ENCODE measurements at regions of chr17 and their contacts with region 1.

Region 1: DNA sequence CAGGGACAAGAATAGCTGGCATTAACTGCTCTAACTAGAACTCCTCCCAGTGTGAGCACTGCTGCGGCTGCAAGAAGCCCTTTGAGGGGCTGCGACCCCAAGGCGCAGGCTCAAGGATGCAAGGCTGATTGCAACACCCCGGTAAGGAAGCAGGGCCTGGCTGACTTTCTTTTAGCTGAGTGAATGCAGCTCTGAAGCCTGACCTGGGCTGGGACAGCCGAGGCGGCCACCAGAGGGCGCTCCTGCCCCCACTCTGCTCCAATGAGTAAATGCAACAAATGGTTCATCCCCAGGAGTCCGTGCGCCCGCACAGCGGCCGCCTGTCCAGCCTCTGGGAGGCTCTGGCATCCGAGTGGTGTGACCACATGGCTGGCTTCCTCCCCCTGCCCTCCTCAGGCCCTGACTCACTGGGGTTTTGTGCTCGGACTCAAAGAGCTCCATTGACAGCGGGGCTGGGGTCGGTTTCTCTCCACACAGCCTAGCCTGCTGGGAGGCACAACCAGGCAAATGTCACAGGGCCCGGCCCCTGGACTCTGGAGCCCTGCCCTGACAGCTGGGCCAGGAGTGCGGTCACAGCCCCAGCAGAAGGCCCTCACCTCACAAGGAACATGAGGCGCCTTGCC is at the start of gene SMIM5:
- DNase-seq: peak; percentile 63
- ATAC-seq: peak; percentile 89
- H3K4me3 ChIP-seq: peak within 1 kb of the TSS in 1 of 2 experiments; percentile 6; a peak in 1 of 4 replicates
- H3K27ac ChIP-seq: peak within 1 kb of the TSS; percentile 73
- H3K4me1 ChIP-seq: peaks cover 15 to 22% of the 10 kb centered on the region in 2 experiments
- H3K27me3 ChIP-seq: no peaks in the 10 kb centered on the region
- CTCF ChIP-seq: peak; percentile 95 to 99 (median 99)
- POLR2A ChIP-seq: no peak
- RAD21 ChIP-seq: peak; percentile 92
- total RNA-seq, gene SMIM5: 0.12 TPM

Region 2: GRCh38 chr17:75430159-75430974 is 202.6 kb before region 1 on chr17:
- CTCF ChIA-PET with region 1: interaction called, 14 read pairs
- POLR2A ChIA-PET with region 1: no interaction called
- RAD21 ChIA-PET with region 1: no interaction called
- intact Hi-C with region 1: no loop called
- DNase-seq: no peak
- ATAC-seq: peak; percentile 66
- H3K4me3 ChIP-seq: peak overlapping the region in 1 of 2 experiments; percentile 43; a peak in 2 of 4 replicates
- H3K27ac ChIP-seq: peak overlapping the region; percentile 48; the same call in 1 of the 2 replicates
- H3K4me1 ChIP-seq: peaks cover 33 to 46% of the 10 kb centered on the region in 2 experiments
- H3K27me3 ChIP-seq: no peaks in the 10 kb centered on the region
- CTCF ChIP-seq: no peak
- POLR2A ChIP-seq: no peak
- RAD21 ChIP-seq: no peak

Region 3: GRCh38 chr17:75440738-75441448 is 192.1 kb before region 1 on chr17:
- CTCF ChIA-PET with region 1: no interaction called
- POLR2A ChIA-PET with region 1: no interaction called
- RAD21 ChIA-PET with region 1: no interaction called
- intact Hi-C with region 1: no loop called
- DNase-seq: no peak
- ATAC-seq: no peak
- H3K4me3 ChIP-seq: no peak overlapping the region
- H3K27ac ChIP-seq: no peak overlapping the region
- H3K4me1 ChIP-seq: peaks cover 4 to 20% of the 10 kb centered on the region in 2 experiments; a peak in 3 of 4 replicates
- H3K27me3 ChIP-seq: no peaks in the 10 kb centered on the region
- CTCF ChIP-seq: no peak
- POLR2A ChIP-seq: no peak
- RAD21 ChIP-seq: no peak

Region 4: GRCh38 chr17:75496005-75496404 is 137.0 kb before region 1 on chr17:
- CTCF ChIA-PET with region 1: no interaction called
- POLR2A ChIA-PET with region 1: no interaction called
- RAD21 ChIA-PET with region 1: no interaction called
- intact Hi-C with region 1: no loop called
- DNase-seq: no peak
- ATAC-seq: no peak
- H3K4me3 ChIP-seq: no peak overlapping the region
- H3K27ac ChIP-seq: no peak overlapping the region
- H3K4me1 ChIP-seq: no peaks in the 10 kb centered on the region
- H3K27me3 ChIP-seq: no peaks in the 10 kb centered on the region
- CTCF ChIP-seq: no peak
- POLR2A ChIP-seq: no peak
- RAD21 ChIP-seq: no peak

Region 5: DNA sequence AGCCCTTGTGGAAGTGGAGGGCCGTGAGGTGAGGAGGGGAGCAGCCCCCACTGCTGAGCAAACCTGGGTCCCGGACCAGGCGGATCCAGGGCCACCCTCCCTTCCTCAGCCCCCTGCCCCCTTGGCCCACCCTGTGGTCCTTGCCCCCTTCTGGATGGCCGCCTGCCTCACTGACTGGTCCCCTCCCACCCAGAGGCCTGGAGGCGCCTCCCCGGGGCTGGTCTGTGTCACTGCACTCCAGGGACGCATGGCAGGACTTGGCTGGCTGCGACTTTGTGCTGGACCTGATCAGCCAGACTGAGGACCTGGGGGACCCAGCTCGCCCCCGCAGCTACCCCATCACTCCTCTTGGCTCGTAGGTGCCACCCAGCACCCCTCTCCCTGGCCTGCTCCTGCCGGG is 19.0 kb before region 1 on chr17:
- CTCF ChIA-PET with region 1: interaction called, 63 read pairs
- POLR2A ChIA-PET with region 1: no interaction called
- RAD21 ChIA-PET with region 1: no interaction called
- intact Hi-C with region 1: no loop called
- DNase-seq: no peak
- ATAC-seq: peak; percentile 77
- H3K4me3 ChIP-seq: no peak overlapping the region
- H3K27ac ChIP-seq: no peak overlapping the region
- H3K4me1 ChIP-seq: peaks cover 24 to 45% of the 10 kb centered on the region in 2 experiments
- H3K27me3 ChIP-seq: no peaks in the 10 kb centered on the region
- CTCF ChIP-seq: peak; percentile 65 to 91 (median 67); a peak in 5 of 6 replicates
- POLR2A ChIP-seq: no peak
- RAD21 ChIP-seq: peak; percentile 86

Region 6: DNA sequence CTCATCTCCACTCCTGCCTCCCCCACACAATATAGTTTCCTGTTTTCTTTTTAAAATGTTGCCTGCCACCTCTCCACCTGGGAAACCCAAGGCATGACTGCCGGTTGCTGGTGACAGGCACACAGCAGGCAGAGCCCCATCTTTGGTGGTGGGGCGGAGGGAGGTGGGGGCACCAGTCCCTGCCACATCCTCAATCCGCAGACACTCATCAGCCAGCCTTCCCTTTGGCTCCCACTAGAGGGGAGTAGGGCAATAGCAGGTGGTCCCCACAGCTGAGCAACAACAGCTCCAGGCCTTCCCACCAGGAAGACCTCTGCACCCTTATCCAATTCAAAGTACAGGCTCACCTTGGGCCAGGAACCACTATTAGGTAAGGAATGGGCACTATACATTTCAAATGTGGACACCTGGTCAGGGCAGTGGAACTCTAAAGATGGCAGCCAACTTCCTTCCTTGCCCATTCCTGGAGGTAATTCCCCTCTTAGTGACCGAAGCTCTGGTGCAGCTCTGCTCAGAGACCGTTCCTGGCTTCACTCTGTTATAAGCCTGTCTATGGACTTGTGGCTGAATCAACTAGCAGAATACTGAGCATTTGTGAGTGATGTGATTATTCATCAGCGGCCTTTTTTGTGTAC is 20.1 kb after region 1 on chr17:
- CTCF ChIA-PET with region 1: interaction called, 75 read pairs
- POLR2A ChIA-PET with region 1: no interaction called
- RAD21 ChIA-PET with region 1: interaction called, 7 to 13 read pairs
- intact Hi-C with region 1: loop called (anchors 1 kb)
- DNase-seq: no peak
- ATAC-seq: peak; percentile 95
- H3K4me3 ChIP-seq: no peak overlapping the region
- H3K27ac ChIP-seq: no peak overlapping the region
- H3K4me1 ChIP-seq: no peaks in the 10 kb centered on the region
- H3K27me3 ChIP-seq: no peaks in the 10 kb centered on the region
- CTCF ChIP-seq: peak; percentile 87 to 98 (median 95)
- POLR2A ChIP-seq: no peak
- RAD21 ChIP-seq: peak; percentile 82

Region 7: GRCh38 chr17:75673487-75673886 is 40.5 kb after region 1 on chr17:
- CTCF ChIA-PET with region 1: interaction called, 13 read pairs
- POLR2A ChIA-PET with region 1: interaction called, 3 read pairs
- RAD21 ChIA-PET with region 1: no interaction called
- intact Hi-C with region 1: no loop called
- DNase-seq: no peak
- ATAC-seq: peak; percentile 24
- H3K4me3 ChIP-seq: no peak overlapping the region
- H3K27ac ChIP-seq: 0 out of 2 replicates have a peak overlapping the region, but pooled peaks have one; percentile 4
- H3K4me1 ChIP-seq: peaks cover 2 to 20% of the 10 kb centered on the region in 2 experiments; a peak in 3 of 4 replicates
- H3K27me3 ChIP-seq: no peaks in the 10 kb centered on the region
- CTCF ChIP-seq: no peak
- POLR2A ChIP-seq: no peak
- RAD21 ChIP-seq: no peak

Region 8: DNA sequence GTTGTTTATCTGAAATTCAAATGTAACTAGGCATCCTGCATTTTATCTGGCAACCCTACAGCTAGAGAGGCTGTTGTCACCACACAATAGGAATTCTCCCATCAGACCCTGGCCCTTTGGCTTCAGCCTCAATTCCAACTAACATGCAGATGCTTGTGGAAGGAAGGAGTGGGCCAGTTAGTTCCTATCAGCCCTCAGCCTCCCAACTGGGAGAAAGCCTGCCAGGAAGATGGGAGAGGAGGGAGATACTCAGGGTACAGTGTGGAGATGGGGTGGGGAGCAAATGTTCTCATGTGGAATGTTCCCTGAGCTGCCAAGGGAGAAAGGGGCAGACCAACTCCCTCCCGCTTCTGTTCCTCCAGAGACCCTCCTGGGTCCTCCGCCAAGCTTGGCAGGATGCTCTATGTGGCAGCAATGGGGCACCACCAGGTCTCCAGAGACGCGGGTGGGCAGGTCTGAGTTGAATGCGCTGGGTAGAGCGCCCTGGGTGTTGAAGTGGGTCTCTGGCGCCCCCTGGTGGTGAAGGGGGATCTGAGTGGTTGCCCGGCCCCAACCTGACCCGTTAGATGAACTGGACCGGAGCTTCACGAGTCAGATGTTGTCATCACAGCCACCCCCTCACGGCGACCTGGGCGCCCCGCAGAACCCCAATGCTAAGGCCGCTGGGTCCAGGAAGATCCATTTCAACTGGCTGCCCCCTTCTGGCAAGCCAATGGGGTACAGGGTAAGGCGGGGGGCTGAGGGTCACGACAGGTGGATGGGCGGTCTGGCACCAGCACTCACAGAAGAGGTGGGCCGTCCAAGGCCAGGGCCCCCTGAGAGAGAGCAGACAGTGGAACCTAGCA is 116.8 kb after region 1 on chr17:
- CTCF ChIA-PET with region 1: interaction called, 169 read pairs
- POLR2A ChIA-PET with region 1: interaction called, 4 read pairs
- RAD21 ChIA-PET with region 1: interaction called, 9 to 18 read pairs
- intact Hi-C with region 1: loop called (anchors 1 kb)
- DNase-seq: no peak
- ATAC-seq: peak; percentile 81
- H3K4me3 ChIP-seq: no peak overlapping the region
- H3K27ac ChIP-seq: peak overlapping the region; percentile 41; the same call in 1 of the 2 replicates
- H3K4me1 ChIP-seq: peaks cover 0 to 3% of the 10 kb centered on the region in 2 experiments; a peak in 1 of 4 replicates
- H3K27me3 ChIP-seq: no peaks in the 10 kb centered on the region
- CTCF ChIP-seq: peak; percentile 85 to 98 (median 95)
- POLR2A ChIP-seq: no peak
- RAD21 ChIP-seq: peak; percentile 83

Region 9: DNA sequence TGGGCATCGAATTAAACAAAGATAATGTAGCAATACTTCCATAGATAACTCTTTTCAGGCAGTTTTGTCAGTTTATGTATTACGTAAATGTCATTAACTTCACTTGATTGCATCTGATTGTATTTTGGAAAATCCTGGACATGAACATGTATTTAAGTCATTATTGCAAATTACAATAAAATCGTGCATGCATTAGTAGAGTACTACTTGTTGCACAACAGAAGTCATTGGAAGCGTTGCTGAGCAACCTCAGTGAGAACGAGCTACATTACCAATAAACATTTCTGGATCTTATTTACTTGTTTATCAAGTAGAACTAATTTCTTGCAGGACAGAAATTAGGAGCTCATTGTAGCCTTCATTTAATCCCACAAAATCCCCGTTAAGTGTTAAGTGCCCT is 158.3 kb after region 1 on chr17:
- CTCF ChIA-PET with region 1: no interaction called
- POLR2A ChIA-PET with region 1: no interaction called
- RAD21 ChIA-PET with region 1: no interaction called
- intact Hi-C with region 1: no loop called
- DNase-seq: no peak
- ATAC-seq: no peak
- H3K4me3 ChIP-seq: no peak overlapping the region
- H3K27ac ChIP-seq: no peak overlapping the region
- H3K4me1 ChIP-seq: peaks cover 2 to 10% of the 10 kb centered on the region in 2 experiments
- H3K27me3 ChIP-seq: no peaks in the 10 kb centered on the region
- CTCF ChIP-seq: no peak
- POLR2A ChIP-seq: no peak
- RAD21 ChIP-seq: no peak

Measured in HCT116 (cell line).